ENCODE measurements at regions of chr3 and their contacts with region 1.

Region 1: GRCh38 chr3:51836606-51837005 is 24.8 kb upstream of the IQCF2 start:
- DNase-seq: no peak
- H3K4me3 ChIP-seq: no peak overlapping the region
- CTCF ChIP-seq: no peak

Region 2: GRCh38 chr3:51706788-51707731 is 129.5 kb before region 1 on chr3 and contains the start of gene GRM2:
- in situ Hi-C with region 1: no loop called
- DNase-seq: peak; percentile 75
- H3K4me3 ChIP-seq: peak within 1 kb of the TSS; percentile 38
- CTCF ChIP-seq: no peak

Region 3: DNA sequence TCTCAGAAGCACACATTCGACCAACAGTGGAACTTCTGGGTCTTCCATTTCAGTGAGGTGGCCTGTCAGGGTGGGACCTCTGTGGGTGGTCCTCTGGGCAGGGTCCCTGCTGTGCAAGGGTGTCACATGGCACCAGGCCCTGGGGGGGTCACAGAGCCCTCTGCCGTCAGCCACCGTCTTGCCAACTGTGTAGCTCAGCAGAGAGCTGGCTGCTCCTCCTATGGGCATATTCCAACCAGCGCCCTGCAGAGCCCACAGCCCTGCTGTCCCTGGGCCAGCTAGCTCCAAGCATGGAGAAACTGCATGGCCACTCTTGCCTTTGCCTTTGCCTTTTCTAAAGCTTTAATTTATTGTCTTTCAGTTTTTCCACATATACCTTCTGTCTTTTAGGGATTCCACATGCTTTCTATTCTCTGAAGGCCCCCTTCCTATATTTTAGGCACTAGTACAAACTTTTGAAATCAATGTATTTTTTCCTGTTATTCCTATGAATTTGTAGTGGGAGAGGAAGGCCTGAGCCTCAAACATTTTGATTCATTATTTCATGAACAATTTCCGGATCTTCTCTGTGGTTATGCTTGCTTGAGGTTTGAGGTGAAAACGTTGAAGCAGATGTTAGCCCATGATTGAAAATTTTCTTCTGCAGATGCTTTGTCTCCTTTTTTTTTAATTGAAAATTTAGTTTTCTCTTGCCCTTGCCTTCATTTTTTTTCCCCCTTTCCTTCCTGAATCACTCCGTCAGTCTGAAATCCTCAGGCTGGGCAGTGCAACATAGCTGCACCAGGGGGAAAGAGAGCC is 54.8 kb after region 1 on chr3:
- in situ Hi-C with region 1: loop called (anchors 5 kb)
- DNase-seq: no peak
- H3K4me3 ChIP-seq: no peak overlapping the region
- CTCF ChIP-seq: no peak